ENCODE measurements at regions of chr11 and their contacts with region 1.

Region 1: DNA sequence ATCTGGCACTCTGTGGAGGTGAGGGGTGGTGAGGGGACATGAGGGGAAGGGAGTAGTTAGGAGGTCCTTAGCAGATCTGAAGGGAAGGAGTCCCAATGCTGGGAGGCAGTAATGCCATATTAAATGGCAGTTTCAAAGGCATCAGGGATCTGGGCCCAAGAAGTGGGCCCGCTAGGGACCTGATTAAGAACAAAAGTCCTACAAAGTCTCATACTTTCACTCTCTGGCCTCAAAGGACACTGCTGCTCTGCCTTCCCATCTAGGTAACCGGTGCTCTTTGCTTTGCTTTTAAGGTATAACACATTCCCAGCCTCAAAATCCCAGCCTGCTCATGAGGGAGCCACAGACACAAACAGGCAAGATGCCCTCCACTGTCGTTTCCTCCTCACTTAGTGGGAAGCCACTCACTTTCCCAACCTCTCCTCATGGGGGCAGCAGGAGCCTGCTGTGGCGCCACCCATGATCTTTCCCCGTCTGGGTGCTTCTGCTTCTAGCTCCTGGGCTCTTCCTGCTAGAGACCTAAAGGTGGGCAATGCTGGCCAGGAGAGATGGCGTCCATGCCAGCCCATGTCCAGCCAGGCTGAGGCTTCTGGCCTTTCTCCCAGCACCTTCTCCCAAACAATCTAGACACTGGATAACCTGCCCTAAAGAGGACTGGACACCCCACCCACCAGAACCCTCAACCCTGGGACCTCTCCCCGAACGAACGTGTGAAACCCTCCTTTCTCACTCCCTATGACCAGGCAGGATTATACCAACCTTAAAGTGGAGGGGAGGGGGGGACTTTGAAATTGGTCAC is 68.3 kb downstream of the PLEKHA7 start:
- DNase-seq: no peak
- H3K4me3 ChIP-seq: no peak overlapping the region
- CTCF ChIP-seq: peak in 1 of 3 donors; percentile 39
- POLR2A ChIP-seq: no peak

Region 2: GRCh38 chr11:16958833-16959232 is 13.0 kb after region 1 on chr11:
- intact Hi-C with region 1: no loop called
- DNase-seq: no peak
- H3K4me3 ChIP-seq: no peak overlapping the region
- CTCF ChIP-seq: no peak
- POLR2A ChIP-seq: no peak

Region 3: GRCh38 chr11:17063171-17064002 is 117.5 kb after region 1 on chr11:
- intact Hi-C with region 1: loop called (anchors 10 kb)
- DNase-seq: no peak
- H3K4me3 ChIP-seq: no peak overlapping the region
- CTCF ChIP-seq: no peak
- POLR2A ChIP-seq: no peak

Region 4: GRCh38 chr11:17076517-17077239 is 130.8 kb after region 1 on chr11:
- intact Hi-C with region 1: no loop called
- DNase-seq: no peak
- H3K4me3 ChIP-seq: peak overlapping the region; percentile 82
- CTCF ChIP-seq: no peak
- POLR2A ChIP-seq: no peak

Measured in lower leg skin (tissue), 4 donors.